PC-9 (cell line): ENCODE measurements at regions of chr7 and their contacts with region 1.

Region 1: GRCh38 chr7:124152859-124153692 is 120.2 kb upstream of the TMEM229A start:
- DNase-seq: peak in 1 of 2 experiments; percentile 14
- H3K4me3 ChIP-seq: no peak overlapping the region
- H3K27ac ChIP-seq: no peak overlapping the region
- H3K4me1 ChIP-seq: no peaks in the 10 kb centered on the region
- H3K27me3 ChIP-seq: no peaks in the 10 kb centered on the region
- CTCF ChIP-seq: peak; percentile 53

Region 2: GRCh38 chr7:123770378-123770777 is 382.7 kb before region 1 on chr7:
- CTCF ChIA-PET with region 1: interaction called, 10 read pairs
- POLR2A ChIA-PET with region 1: no interaction called
- intact Hi-C with region 1: no loop called
- DNase-seq: peak; percentile 38 to 81
- H3K4me3 ChIP-seq: 0 out of 2 replicates have a peak overlapping the region, but pooled peaks have one; percentile 3
- H3K27ac ChIP-seq: peak overlapping the region; percentile 61
- H3K4me1 ChIP-seq: peaks cover 27% of the 10 kb centered on the region
- H3K27me3 ChIP-seq: no peaks in the 10 kb centered on the region
- CTCF ChIP-seq: no peak

Region 3: DNA sequence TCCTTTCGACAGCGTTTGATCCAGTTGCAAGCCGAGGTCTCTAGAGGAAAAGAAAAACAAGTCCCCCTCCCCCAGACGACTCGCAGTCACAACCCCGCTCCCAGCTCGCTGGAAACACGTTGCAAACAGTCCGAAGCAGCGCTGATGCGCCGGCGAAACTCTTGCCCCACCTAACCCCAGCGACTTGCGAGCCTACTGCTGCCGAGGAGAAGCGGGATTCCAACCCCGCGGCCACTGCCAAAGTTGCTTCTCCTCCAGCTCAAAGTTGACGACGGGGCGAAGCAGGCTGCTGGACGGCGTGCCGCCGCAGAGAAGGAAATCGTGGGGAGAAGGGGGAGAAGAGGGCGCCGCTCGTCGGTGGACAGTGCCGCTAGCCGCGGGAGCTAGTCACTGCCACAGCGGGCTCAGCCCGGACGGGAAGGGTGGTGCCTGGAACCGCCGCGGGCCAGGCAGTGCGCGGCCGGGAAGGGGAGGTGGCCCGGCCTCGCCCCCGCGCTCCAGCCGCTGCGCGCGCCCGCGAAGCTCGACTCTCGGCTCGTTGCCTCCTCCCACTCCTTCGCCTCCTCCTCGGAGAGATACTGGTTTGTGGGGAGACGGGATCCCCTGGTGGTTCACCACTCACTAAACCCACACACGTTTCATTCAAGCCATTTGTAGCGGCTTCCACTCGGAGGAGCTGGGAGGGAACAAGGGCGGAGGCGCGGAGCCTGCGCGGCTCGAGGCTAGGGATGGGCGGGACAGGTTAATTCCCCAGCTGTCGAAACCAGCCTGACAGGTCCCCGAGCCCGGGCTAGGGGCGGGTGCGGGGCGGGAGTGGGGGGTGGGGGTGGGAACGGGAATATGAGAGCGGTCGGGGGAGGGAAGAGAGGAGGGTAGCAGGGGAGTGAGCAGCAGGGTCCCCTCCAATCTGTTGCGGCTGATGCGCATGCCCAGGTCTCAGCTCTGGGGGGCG is 612.6 kb after region 1 on chr7 and contains the start of gene GPR37:
- CTCF ChIA-PET with region 1: interaction called, 3 read pairs
- POLR2A ChIA-PET with region 1: no interaction called
- intact Hi-C with region 1: loop called (anchors 1 kb)
- DNase-seq: peak; percentile 63 to 87
- H3K4me3 ChIP-seq: peak within 1 kb of the TSS; percentile 73
- H3K27ac ChIP-seq: no peak within 1 kb of the TSS
- H3K4me1 ChIP-seq: no peaks in the 10 kb centered on the region; the same call in 1 of the 2 replicates
- H3K27me3 ChIP-seq: peaks cover 2% of the 10 kb centered on the region; the same call in 1 of the 2 replicates
- CTCF ChIP-seq: no peak; the same call in 1 of the 2 replicates
- total RNA-seq, gene GPR37: 1.8 and 1.9 TPM in 2 replicates

Region 4: GRCh38 chr7:124784879-124785818 is 632.1 kb after region 1 on chr7:
- CTCF ChIA-PET with region 1: interaction called, 12 read pairs
- POLR2A ChIA-PET with region 1: interaction called, 3 read pairs
- intact Hi-C with region 1: loop called (anchors 1 kb)
- DNase-seq: peak in 1 of 2 experiments; percentile 45
- H3K4me3 ChIP-seq: no peak overlapping the region
- H3K27ac ChIP-seq: no peak overlapping the region
- H3K4me1 ChIP-seq: no peaks in the 10 kb centered on the region
- H3K27me3 ChIP-seq: no peaks in the 10 kb centered on the region
- CTCF ChIP-seq: peak; percentile 88

Region 5: GRCh38 chr7:124840435-124840834 is 687.4 kb after region 1 on chr7:
- CTCF ChIA-PET with region 1: no interaction called
- POLR2A ChIA-PET with region 1: interaction called, 4 read pairs
- intact Hi-C with region 1: loop called (anchors 5 kb)
- DNase-seq: no peak
- H3K4me3 ChIP-seq: no peak overlapping the region
- H3K27ac ChIP-seq: no peak overlapping the region
- H3K4me1 ChIP-seq: no peaks in the 10 kb centered on the region
- H3K27me3 ChIP-seq: no peaks in the 10 kb centered on the region
- CTCF ChIP-seq: peak; percentile 33

Region 6: DNA sequence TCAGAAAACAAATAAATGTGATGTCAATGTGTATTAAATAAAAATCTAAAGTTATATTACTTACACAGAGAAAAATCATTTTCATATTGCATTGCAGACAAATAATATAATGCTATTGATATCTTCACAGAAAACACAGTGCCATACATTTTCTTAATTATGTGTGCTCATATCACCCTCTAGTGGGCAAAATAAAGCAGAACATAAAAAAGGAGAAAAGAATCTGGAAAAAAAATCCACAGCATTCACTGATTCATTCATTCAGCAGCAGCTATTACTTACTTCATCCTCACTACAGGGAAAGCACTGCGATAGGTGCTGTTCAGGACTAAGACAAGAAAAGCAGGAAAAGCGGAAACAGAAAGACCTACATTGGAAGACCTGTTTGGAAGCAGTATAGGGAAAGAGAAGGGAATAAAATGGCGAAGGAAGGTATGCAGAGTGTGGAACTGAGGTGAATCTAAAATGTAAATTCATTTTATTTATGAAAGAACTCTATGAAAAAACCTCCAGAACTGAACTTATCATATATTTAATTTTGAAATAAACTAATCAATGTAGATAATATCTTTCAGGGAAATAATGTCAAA is 703.3 kb after region 1 on chr7:
- CTCF ChIA-PET with region 1: no interaction called
- POLR2A ChIA-PET with region 1: no interaction called
- intact Hi-C with region 1: loop called (anchors 2 kb)
- DNase-seq: peak; percentile 3 to 36
- H3K4me3 ChIP-seq: no peak overlapping the region
- H3K27ac ChIP-seq: no peak overlapping the region
- H3K4me1 ChIP-seq: no peaks in the 10 kb centered on the region
- H3K27me3 ChIP-seq: no peaks in the 10 kb centered on the region
- CTCF ChIP-seq: peak; percentile 77

Region 7: GRCh38 chr7:125025620-125026019 is 872.5 kb after region 1 on chr7:
- CTCF ChIA-PET with region 1: no interaction called
- POLR2A ChIA-PET with region 1: no interaction called
- intact Hi-C with region 1: loop called (anchors 5 kb)
- DNase-seq: no peak
- H3K4me3 ChIP-seq: no peak overlapping the region
- H3K27ac ChIP-seq: no peak overlapping the region
- H3K4me1 ChIP-seq: no peaks in the 10 kb centered on the region
- H3K27me3 ChIP-seq: no peaks in the 10 kb centered on the region
- CTCF ChIP-seq: no peak